Endothelial cell of umbilical vein (primary cell): ENCODE measurements at regions of chr11 and their contacts with region 1.

Region 1: GRCh38 chr11:43920598-43921419 is 21.6 kb upstream of the C11orf96 start:
- DNase-seq: peak; percentile 96
- H3K4me3 ChIP-seq: no peak overlapping the region
- H3K27ac ChIP-seq: peak overlapping the region; percentile 75
- H3K4me1 ChIP-seq: peaks cover 39% of the 10 kb centered on the region
- H3K27me3 ChIP-seq: no peaks in the 10 kb centered on the region
- CTCF ChIP-seq: no peak
- POLR2A ChIP-seq: no peak

Region 2: GRCh38 chr11:43880640-43881159 is 40.1 kb before region 1 on chr11 and contains the start of gene ALKBH3:
- CTCF ChIA-PET with region 1: no interaction called
- POLR2A ChIA-PET with region 1: no interaction called
- dilution Hi-C with region 1: no loop called
- intact Hi-C with region 1: no loop called
- DNase-seq: peak; percentile 91
- H3K4me3 ChIP-seq: peak within 1 kb of the TSS; percentile 60 to 92 (median 80)
- H3K27ac ChIP-seq: peak within 1 kb of the TSS; percentile 2
- H3K4me1 ChIP-seq: peaks cover 14% of the 10 kb centered on the region
- H3K27me3 ChIP-seq: peaks cover 8 to 10% of the 10 kb centered on the region in 2 experiments
- CTCF ChIP-seq: no peak
- POLR2A ChIP-seq: no peak
- total RNA-seq, gene ALKBH3: 32.3 and 34.7 TPM in 2 replicates

Region 3: DNA sequence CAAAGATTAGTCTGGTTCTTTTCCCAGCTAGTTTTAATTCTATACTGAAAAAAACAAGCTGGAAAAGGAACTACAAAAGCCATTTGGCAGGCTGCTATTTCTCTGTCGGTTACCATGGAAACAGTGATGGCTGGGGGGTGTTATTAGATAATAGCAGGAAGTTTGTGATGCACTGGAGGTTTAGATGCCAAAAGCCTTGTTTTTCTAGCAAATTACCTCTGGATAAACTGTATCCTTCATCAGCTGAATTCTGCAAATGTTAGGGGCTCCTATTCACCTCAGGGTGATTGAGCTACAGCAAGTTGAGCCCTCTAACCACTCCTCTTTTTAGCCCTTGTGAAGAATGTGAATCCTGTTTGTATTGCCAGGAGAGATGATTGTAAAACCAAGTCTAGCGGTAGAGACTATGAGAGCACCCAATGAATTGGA is 15.0 kb before region 1 on chr11:
- CTCF ChIA-PET with region 1: interaction called, 15 read pairs
- POLR2A ChIA-PET with region 1: interaction called, 3 read pairs
- dilution Hi-C with region 1: no loop called
- intact Hi-C with region 1: no loop called
- DNase-seq: peak; percentile 93
- H3K4me3 ChIP-seq: no peak overlapping the region
- H3K27ac ChIP-seq: peak overlapping the region; percentile 42
- H3K4me1 ChIP-seq: peaks cover 16% of the 10 kb centered on the region
- H3K27me3 ChIP-seq: no peaks in the 10 kb centered on the region
- CTCF ChIP-seq: no peak
- POLR2A ChIP-seq: no peak